ENCODE measurements at regions of chr10 and their contacts with region 1.

Region 1: DNA sequence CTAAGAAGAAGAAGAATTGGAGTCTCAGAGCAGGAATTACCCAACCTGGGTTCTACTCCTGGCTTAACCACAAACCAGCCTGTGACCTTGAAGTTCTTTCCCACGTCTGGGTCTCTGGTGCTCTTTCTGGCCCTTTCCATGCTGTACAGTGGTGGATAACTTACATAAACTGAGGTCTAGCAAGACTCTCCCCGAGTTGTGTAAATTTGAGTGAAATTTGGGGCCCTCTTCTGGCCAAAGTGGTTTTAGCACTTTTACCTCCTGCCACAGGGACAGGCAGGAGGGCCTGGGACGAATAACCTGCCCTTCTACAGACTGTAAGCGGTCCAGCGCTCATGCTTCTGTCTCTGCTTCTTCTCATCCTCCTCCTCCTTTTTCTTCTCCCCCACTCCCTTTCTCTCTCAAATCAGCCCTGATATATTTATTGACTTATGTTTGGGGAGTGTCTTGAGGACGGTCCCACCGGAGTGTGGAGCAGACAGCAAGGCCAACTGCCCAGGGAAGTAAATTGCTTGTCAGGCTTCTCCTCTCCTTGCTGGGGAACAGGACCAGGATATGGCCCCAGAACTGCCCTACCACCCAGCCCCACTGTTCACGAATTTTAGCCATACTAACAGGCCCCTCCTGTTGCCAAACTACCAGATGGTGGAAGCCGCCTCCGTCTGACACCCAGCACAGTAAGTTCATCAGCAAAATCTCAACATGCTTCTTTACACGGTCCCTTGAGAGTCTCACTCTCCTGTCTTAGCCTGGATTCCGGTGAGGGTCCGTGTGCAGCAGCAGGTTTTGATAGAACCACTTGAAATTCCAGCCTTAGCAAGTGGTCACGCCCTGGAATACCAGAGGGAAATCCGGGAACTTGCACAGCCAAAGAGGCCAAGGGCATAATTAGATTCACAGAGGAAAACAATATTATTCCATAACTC is 4.0 kb upstream of the SH3PXD2A start:
- DNase-seq: peak; percentile 56
- H3K4me3 ChIP-seq: no peak overlapping the region
- CTCF ChIP-seq: peak; percentile 68

Region 2: DNA sequence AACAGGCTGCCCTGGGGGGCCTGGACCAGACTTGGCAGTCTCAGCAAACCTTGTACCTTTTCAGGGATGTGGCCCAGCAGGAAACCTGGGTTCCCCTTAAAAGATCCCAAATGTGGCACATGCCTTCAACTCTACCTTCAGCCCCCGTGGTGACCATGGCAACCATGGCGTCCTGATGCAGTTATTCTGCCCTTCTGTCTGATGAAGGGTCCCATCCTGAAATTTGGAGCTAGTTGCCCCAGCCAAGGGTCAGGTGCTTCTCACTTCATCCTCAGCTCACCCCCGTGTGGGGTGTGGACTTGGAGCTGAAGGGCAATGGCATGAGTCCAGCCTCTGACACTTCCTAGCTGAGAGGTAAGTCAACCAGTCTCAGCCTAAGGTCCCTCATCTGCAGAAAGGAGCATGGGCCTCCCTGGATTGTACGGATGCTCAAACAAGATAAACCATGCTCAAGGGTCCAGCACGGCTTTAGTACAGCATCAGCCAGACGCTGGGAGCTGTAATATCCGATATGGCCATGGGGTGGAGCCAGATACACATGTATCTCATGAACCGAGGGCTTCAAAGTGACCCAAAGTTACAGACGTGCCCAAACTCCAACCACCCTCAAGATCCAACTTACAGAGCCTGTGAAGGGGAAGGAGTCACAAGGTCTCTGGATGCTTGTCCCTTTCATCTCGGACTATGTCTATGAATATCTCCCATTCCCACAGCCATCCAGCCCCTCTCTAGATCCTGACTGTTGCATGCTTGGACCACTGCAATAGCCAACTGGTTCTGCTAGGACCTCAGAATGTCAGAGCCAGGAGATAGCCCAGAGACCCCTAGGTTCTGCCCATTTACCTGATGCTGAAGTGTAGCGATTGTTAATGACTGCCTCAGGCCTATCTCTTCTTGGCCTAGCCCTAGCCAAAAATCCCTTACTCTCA is 146.6 kb before region 1 on chr10:
- in situ Hi-C with region 1: loop called (anchors 10 kb)
- DNase-seq: peak; percentile 65
- H3K4me3 ChIP-seq: no peak overlapping the region
- CTCF ChIP-seq: peak; percentile 76

Region 3: DNA sequence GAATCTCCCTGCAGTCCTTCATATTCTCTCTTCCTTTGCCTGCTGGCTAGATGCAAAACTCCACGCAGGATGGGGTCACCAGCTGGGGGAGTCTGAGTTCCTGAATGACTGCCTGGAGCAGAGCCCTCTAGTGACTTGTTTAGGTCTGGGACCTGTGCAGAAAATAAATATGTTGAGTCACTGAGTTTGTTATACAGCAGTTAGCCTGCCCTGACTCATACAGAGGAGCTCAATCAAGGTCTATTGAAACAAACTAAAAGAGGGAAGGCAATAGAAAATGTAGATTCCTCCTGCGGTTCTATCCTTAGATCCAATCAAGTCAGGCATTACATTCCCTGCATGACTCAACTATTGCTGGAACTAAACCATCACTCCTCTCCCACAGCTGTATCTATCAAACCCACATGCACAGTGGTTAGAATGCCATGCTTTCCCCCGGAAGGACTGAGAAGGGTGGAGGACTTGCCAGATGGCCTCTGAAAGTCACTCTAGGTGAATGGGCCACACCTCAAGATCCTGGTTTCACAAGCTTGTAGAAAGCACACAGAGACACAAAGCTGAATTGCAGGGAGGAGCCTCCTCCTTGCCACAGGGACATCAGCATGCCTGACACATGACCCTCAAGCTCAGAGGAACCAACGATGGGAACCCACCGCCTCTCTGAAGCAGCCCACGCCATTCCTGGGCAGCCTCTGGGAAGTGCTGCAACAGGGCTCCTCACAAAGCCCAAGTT is 77.9 kb before region 1 on chr10:
- in situ Hi-C with region 1: no loop called
- DNase-seq: peak; percentile 92
- H3K4me3 ChIP-seq: no peak overlapping the region
- CTCF ChIP-seq: peak; percentile 55

Region 4: DNA sequence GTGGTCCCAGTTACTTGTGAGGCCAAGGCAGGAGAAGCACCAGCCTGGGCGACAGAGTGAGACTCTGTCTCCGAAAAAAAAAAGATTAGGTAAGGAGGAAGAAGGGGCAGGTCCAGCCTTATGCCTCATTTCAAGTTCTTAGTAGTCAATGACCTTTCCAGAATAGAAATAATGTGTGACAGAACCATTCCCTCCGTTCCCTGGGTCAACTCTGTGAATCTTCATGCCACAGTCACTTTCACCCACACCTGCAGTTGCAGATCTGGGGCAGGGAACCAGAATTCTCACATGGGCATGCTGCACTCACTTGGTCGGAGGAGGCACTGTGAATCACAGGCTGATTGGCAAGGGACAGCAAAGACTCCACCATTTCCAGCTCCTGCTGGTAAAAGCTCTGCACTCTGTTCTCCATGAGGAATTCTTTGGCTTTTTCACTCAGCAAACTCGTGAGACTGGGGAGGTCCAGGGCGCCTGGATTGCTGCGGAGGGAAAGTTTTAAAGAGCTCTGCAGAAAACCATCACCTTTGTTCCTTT is 37.9 kb after region 1 on chr10:
- in situ Hi-C with region 1: no loop called
- DNase-seq: no peak
- H3K4me3 ChIP-seq: no peak overlapping the region
- CTCF ChIP-seq: no peak